PC-9 (cell line): ENCODE measurements at regions of chr9 and their contacts with region 1.

Region 1: DNA sequence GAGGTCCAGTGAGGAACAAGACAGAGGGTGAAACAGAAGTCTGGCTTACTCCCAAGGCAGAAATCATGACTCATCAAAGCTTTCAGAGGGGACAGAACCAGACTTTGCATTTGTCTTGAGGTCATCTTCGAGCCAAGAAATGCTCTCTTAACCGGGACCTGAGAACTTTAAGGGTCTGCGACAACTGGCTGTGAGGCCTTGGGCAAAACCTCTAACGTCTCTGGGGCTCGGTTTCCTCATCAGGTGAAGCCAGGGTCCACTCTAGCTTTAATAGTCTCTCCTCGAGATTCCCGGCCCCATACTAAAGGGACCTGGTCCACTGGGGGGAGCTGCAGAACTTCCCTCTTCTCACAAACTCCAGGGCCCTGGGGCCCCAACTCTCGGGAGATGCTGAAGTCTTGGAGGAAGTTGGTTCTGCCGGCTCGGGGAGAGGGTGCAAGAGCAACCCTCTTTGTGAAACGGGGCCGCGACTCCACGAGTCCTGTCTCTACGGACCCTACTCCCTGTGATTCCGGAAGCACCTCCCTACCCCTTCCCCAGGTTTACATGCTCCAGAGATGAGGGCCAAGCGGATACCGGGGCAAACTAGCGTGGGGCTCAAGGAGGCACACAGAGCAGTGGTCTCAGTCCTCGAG is 2.6 kb downstream of the GLIS3 start:
- DNase-seq: peak; percentile 63 to 69
- H3K4me3 ChIP-seq: peak overlapping the region; percentile 90
- H3K27ac ChIP-seq: peak overlapping the region; percentile 94
- H3K4me1 ChIP-seq: peaks cover 48% of the 10 kb centered on the region
- H3K27me3 ChIP-seq: no peaks in the 10 kb centered on the region
- CTCF ChIP-seq: peak; percentile 57; the same call in 1 of the 2 replicates

Region 2: DNA sequence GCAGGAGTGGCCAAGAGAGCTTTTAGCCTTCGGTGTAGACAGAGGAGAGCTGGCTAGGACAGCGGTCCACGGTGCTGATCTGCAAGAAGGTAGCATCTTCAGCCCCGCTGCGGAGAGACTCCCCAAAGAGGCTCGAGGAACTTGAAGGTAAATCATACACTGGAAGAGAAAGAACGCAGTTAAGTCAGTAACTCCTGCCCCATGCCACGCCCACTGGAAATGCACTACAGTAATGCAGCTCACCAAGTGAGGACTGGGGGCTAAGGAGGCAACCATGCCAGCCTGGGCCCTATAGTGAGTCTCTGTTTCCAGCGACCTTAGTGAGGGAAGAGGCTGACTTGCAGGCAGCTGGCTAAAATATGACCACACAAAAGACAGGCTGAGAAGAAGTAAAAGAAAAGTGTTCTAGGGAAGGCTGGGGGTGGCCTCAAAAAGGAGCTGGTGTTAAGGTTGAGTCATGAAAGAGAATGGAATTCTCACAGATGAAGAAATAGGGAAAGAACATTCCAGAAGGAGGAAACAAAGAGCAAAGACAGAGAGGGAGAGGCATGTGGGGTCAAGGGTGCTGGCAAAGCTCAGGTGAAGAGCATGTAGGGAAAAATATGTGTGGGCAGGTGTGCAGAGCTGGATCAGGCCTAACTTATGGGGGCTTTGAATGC is 468.9 kb before region 1 on chr9:
- CTCF ChIA-PET with region 1: no interaction called
- POLR2A ChIA-PET with region 1: no interaction called
- intact Hi-C with region 1: loop called (anchors 10 kb)
- DNase-seq: peak in 1 of 2 experiments; percentile 51
- H3K4me3 ChIP-seq: no peak overlapping the region
- H3K27ac ChIP-seq: no peak overlapping the region
- H3K4me1 ChIP-seq: peaks cover 29% of the 10 kb centered on the region
- H3K27me3 ChIP-seq: no peaks in the 10 kb centered on the region
- CTCF ChIP-seq: no peak

Region 3: DNA sequence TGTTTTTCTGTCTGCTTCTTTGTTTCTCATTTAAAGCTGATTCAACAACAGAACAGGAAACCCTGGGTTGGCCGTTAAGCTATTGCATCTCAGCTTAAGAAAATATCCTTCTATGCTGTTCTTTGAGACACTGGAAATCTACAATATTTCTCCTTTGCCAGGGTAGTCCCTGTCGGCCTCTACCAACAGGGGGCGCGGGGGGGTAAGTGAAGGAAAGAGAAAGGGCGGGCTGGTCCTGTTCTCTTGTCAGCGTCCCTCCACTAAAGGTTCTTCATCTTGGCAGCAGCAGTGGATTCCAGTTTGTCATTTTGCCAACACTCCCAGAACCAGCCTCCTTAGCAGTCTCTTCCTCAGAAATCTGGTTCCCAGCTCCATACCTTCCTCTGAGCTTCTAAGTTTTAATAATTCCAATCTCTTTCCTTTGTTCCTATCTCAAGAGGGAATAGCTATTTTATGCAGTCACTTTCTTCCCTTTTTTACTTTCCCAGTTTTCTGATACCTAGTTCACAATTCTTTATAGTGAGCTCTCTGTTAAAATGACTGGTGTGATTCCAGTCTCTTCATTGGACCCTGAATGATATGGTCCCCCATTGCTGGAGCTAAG is 219.7 kb before region 1 on chr9:
- CTCF ChIA-PET with region 1: no interaction called
- POLR2A ChIA-PET with region 1: interaction called, 3 read pairs
- intact Hi-C with region 1: loop called (anchors 5 kb)
- DNase-seq: peak in 1 of 2 experiments; percentile 70
- H3K4me3 ChIP-seq: no peak overlapping the region
- H3K27ac ChIP-seq: no peak overlapping the region
- H3K4me1 ChIP-seq: no peaks in the 10 kb centered on the region
- H3K27me3 ChIP-seq: no peaks in the 10 kb centered on the region
- CTCF ChIP-seq: peak; percentile 73

Region 4: DNA sequence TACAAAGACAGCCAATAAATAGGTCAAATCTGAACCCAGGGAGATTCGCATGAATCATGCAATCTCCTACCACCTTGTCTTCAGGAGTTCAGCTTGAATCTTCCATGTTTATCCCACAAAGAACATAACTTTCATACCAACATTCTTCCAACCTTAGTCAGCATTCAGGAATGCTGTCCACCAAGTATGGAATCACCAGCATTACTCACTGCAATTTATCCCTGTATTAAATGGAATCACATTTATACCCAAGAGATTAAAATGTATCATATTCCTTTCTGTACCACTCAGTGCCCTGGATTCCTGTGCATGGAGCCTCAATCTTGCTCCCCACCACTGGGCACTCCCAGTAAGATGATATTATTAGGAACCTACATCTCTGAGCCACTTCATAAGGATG is 160.0 kb before region 1 on chr9:
- CTCF ChIA-PET with region 1: no interaction called
- POLR2A ChIA-PET with region 1: no interaction called
- intact Hi-C with region 1: loop called (anchors 1 kb)
- DNase-seq: peak; percentile 47 to 92
- H3K4me3 ChIP-seq: peak overlapping the region; percentile 10; the same call in 1 of the 2 replicates
- H3K27ac ChIP-seq: peak overlapping the region; percentile 92
- H3K4me1 ChIP-seq: peaks cover 39% of the 10 kb centered on the region
- H3K27me3 ChIP-seq: no peaks in the 10 kb centered on the region
- CTCF ChIP-seq: no peak

Region 5: GRCh38 chr9:4235871-4236804 is 61.1 kb before region 1 on chr9:
- CTCF ChIA-PET with region 1: no interaction called
- POLR2A ChIA-PET with region 1: no interaction called
- intact Hi-C with region 1: loop called (anchors 2 kb)
- DNase-seq: peak in 1 of 2 experiments; percentile 68
- H3K4me3 ChIP-seq: peak overlapping the region; percentile 35; the same call in 1 of the 2 replicates
- H3K27ac ChIP-seq: peak overlapping the region; percentile 92
- H3K4me1 ChIP-seq: peaks cover 16% of the 10 kb centered on the region
- H3K27me3 ChIP-seq: no peaks in the 10 kb centered on the region
- CTCF ChIP-seq: no peak

Region 6: GRCh38 chr9:4339357-4339756 is 42.1 kb after region 1 on chr9:
- CTCF ChIA-PET with region 1: no interaction called
- POLR2A ChIA-PET with region 1: interaction called, 3 read pairs
- intact Hi-C with region 1: loop called (anchors 2 kb)
- DNase-seq: peak; percentile 72 to 75
- H3K4me3 ChIP-seq: no peak overlapping the region
- H3K27ac ChIP-seq: no peak overlapping the region
- H3K4me1 ChIP-seq: 0 out of 2 replicates have a peak, but pooled peaks cover 3% of the 10 kb centered on the region
- H3K27me3 ChIP-seq: no peaks in the 10 kb centered on the region
- CTCF ChIP-seq: peak; percentile 86

Region 7: GRCh38 chr9:4366591-4367330 is 69.5 kb after region 1 on chr9:
- CTCF ChIA-PET with region 1: no interaction called
- POLR2A ChIA-PET with region 1: no interaction called
- intact Hi-C with region 1: no loop called
- DNase-seq: peak in 1 of 2 experiments; percentile 43
- H3K4me3 ChIP-seq: no peak overlapping the region
- H3K27ac ChIP-seq: no peak overlapping the region
- H3K4me1 ChIP-seq: no peaks in the 10 kb centered on the region
- H3K27me3 ChIP-seq: no peaks in the 10 kb centered on the region
- CTCF ChIP-seq: peak; percentile 79

Region 8: DNA sequence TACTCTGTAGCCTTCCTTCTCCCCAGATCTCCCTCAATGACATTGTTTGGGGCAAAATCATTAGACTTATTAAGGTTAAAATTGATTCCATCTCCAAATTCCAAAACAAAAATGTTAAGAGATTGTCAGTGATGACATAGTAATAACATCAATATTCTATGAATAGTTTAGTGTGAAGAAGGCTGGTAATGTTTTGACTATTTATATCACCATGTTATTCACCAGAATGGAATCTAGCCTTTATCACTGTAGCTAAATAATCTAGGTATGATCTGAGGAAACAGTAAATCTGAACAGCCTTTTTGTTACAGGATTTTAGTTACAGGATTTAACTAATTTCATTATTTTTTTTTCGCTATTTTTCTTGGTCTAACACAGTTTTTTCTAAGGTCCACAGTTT is 363.9 kb after region 1 on chr9:
- CTCF ChIA-PET with region 1: no interaction called
- POLR2A ChIA-PET with region 1: no interaction called
- intact Hi-C with region 1: no loop called
- DNase-seq: peak in 1 of 2 experiments; percentile 35
- H3K4me3 ChIP-seq: no peak overlapping the region
- H3K27ac ChIP-seq: 0 out of 2 replicates have a peak overlapping the region, but pooled peaks have one; percentile 4
- H3K4me1 ChIP-seq: peaks cover 41% of the 10 kb centered on the region
- H3K27me3 ChIP-seq: no peaks in the 10 kb centered on the region
- CTCF ChIP-seq: no peak